OCI-LY7 (cell line): ENCODE measurements at regions of chr1 and their contacts with region 1.

Region 1: GRCh38 chr1:6026095-6026809 is 19.4 kb upstream of the KCNAB2 start:
- DNase-seq: peak; percentile 93
- H3K4me3 ChIP-seq: peak overlapping the region; percentile 73
- H3K27ac ChIP-seq: peak overlapping the region; percentile 53
- H3K4me1 ChIP-seq: peaks cover 49% of the 10 kb centered on the region
- CTCF ChIP-seq: no peak

Region 2: DNA sequence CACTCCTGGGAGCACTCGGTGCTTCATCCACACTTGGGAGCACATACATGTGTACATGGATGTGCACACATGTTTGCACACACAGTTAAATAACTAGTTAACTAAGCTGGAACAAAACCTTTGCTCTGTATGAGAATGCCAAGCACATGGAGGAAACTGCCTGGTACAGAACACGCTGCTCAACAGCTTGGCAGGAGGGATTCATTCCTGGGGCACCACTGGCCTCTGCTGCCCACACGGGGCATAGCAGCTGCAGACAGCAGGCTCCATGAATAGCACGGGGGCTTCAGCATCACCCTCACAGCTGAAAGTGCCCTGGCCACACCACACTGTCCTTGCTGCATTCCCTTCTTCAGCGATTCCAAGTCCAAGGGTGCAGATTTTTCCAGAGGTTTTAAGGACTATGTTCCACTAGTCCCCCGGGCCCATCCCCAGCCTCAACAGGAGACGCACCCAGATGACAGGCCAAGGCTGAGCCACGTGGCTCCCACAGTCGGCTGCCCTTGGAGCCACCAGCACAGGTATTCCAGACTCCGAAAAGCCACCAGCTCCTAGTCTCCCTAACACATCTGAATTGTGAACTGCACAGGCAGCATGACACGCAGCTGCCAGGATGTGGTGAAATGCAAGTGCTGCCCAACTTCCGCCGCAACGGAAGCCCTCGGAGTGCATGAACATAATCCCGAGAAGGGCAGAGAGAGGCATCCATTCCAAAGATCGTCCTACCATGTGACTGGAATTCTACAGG is 50.9 kb before region 1 on chr1:
- CTCF ChIA-PET with region 1: no interaction called
- POLR2A ChIA-PET with region 1: no interaction called
- intact Hi-C with region 1: no loop called
- DNase-seq: peak; percentile 58
- H3K4me3 ChIP-seq: no peak overlapping the region
- H3K27ac ChIP-seq: no peak overlapping the region
- H3K4me1 ChIP-seq: peaks cover 24% of the 10 kb centered on the region
- CTCF ChIP-seq: peak; percentile 74

Region 3: DNA sequence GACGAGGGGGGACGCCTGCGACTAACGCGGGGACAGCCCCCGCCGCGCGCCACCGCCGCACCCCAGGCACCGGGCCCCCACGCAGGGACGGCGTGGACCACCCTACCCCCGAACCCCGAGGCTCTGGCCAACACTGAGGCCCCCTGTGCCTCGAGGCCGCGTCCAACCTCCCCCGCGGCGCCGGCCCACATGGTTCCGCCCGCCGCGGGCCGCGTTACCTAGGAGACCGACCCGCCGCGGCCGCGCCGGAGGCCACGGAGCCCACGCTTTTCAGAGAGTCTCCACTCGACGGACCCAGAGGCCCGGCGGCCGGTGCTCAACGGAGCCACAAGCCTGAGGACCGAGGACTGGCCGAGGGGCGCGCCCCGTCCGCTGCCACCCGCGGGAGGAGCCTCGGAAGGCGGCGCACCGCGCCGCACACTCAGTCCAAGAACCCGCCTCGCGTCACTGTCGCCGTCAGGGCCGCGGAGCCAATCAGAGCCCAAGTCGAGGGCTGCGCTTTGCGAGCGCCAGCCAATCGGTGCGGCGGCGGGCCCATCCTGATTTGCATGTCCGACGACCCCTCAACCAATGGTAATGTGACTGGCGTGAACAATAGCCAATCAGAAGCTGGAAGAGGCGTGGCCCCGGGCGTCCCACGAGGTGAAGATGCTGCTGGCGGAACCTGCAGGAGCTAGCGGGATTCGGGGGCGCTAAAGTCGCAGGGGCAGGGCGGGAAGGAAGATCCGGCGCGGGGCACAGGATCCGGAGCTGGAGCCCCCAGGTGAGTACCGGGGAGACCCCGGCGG is 34.0 kb before region 1 on chr1 and contains the start of gene NPHP4:
- CTCF ChIA-PET with region 1: no interaction called
- POLR2A ChIA-PET with region 1: interaction called, 9 read pairs
- intact Hi-C with region 1: loop called (anchors 1 kb)
- DNase-seq: peak; percentile 100
- H3K4me3 ChIP-seq: peak within 1 kb of the TSS; percentile 91
- H3K27ac ChIP-seq: peak within 1 kb of the TSS; percentile 37
- H3K4me1 ChIP-seq: peaks cover 20% of the 10 kb centered on the region
- CTCF ChIP-seq: 0 out of 2 replicates have a peak, but pooled peaks have one; percentile 18
- total RNA-seq, gene NPHP4: 9.2 and 13.4 TPM in 2 replicates